MCF 10A (cell line): ENCODE measurements at regions of chr1 and their contacts with region 1.

Region 1: DNA sequence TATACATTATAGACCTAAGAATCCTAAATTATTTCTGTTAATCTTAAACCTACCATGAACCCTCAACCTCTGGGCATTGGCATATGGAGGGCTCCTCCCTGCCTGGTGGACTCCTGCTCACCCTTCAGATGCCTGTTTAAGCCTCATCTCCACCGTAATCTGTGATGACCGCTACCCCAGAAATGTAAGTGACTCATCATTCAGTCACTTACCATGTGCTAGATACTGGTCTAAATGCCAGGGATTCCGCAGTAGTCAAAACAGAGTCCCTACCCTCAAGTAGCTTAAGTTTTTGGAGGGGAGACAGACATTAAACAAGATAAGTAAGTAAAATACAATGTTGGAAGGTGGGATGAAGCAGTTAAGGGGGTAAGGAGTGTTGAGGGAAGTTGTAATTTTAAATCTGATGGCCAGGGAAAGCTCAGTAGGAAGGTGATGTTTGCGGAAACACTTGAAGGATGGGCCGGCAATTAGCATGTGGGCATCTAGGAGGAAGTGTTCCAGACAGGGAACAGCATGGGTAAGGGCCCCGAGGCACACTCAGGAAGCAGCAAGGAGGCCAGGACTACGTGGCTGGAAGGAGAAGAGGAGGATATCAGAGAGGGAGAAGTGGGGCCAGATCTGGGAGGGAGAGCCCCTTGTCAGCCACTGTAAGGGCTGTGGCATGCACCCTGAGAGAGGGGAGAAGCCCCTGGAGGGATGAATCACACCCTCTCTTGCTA is 141.7 kb upstream of the HOOK1 start:
- DNase-seq: peak; percentile 77
- H3K4me3 Mint-ChIP-seq: peak overlapping the region; percentile 59
- H3K27ac Mint-ChIP-seq: peak overlapping the region; percentile 94
- H3K4me1 Mint-ChIP-seq: peaks cover 41% of the 10 kb centered on the region
- H3K27me3 Mint-ChIP-seq: no peaks in the 10 kb centered on the region
- CTCF ChIP-seq: no peak

Region 2: DNA sequence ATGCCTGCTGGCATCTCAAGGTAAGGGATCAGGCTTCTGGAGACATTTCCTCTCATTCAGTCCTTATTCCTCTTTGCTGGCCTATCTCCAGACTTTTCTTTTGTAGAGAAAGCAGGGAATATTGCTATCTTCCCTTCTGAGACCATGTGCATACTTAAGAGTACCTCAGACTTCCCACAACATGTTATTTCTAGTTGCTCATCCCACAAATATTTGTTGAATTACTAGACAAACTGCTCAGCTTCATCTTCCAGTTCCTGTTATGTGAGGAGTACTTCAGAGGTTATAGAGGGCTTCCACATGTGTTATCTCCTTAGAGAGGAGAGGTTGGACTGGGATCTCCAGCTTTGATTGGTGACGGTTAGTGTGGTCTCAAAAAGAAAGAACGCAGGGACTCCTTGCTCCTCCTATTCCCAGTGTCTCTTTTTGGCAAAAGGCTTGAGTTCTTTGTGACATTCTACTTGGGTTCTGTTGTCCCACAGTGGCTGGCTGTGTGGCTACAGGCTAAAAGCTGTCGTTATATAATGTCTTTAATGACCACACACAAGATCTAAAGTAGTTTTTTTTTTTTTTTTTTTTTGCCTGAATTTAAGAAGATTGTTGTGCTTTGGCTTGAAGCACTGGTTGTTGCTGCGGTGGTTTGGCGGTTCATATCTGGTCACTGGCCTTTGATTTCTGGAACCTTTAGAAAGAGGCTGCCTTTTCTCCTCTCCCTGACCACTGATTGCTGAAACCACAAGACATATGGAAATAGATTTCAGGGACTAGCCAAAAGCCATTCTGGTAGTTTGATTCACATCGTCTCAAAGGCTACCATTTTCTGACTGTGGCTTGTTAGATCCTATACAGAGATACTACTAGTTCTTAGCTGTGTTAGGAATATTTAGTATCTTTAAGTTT is 297.4 kb before region 1 on chr1:
- CTCF ChIA-PET with region 1: no interaction called
- POLR2A ChIA-PET with region 1: interaction called, 10 read pairs
- intact Hi-C with region 1: no loop called
- DNase-seq: peak; percentile 87
- H3K4me3 Mint-ChIP-seq: peak overlapping the region; percentile 36
- H3K27ac Mint-ChIP-seq: peak overlapping the region; percentile 84
- H3K4me1 Mint-ChIP-seq: peaks cover 7% of the 10 kb centered on the region
- H3K27me3 Mint-ChIP-seq: no peaks in the 10 kb centered on the region
- CTCF ChIP-seq: no peak

Region 3: GRCh38 chr1:59427155-59427554 is 245.9 kb before region 1 on chr1:
- CTCF ChIA-PET with region 1: interaction called, 3 read pairs
- POLR2A ChIA-PET with region 1: interaction called, 14 read pairs
- intact Hi-C with region 1: no loop called
- DNase-seq: peak; percentile 70
- H3K4me3 Mint-ChIP-seq: peak overlapping the region; percentile 35
- H3K27ac Mint-ChIP-seq: peak overlapping the region; percentile 71
- H3K4me1 Mint-ChIP-seq: peaks cover 38% of the 10 kb centered on the region
- H3K27me3 Mint-ChIP-seq: no peaks in the 10 kb centered on the region
- CTCF ChIP-seq: no peak

Region 4: GRCh38 chr1:59498640-59499039 is 174.4 kb before region 1 on chr1:
- CTCF ChIA-PET with region 1: interaction called, 4 read pairs
- POLR2A ChIA-PET with region 1: interaction called, 32 read pairs
- intact Hi-C with region 1: no loop called
- DNase-seq: peak; percentile 35
- H3K4me3 Mint-ChIP-seq: no peak overlapping the region
- H3K27ac Mint-ChIP-seq: peak overlapping the region; percentile 90
- H3K4me1 Mint-ChIP-seq: peaks cover 31% of the 10 kb centered on the region
- H3K27me3 Mint-ChIP-seq: no peaks in the 10 kb centered on the region
- CTCF ChIP-seq: no peak

Region 5: GRCh38 chr1:59596441-59596861 is 76.6 kb before region 1 on chr1:
- CTCF ChIA-PET with region 1: no interaction called
- POLR2A ChIA-PET with region 1: interaction called, 12 read pairs
- intact Hi-C with region 1: no loop called
- DNase-seq: peak; percentile 71
- H3K4me3 Mint-ChIP-seq: no peak overlapping the region
- H3K27ac Mint-ChIP-seq: peak overlapping the region; percentile 59
- H3K4me1 Mint-ChIP-seq: peaks cover 19% of the 10 kb centered on the region
- H3K27me3 Mint-ChIP-seq: no peaks in the 10 kb centered on the region
- CTCF ChIP-seq: no peak

Region 6: DNA sequence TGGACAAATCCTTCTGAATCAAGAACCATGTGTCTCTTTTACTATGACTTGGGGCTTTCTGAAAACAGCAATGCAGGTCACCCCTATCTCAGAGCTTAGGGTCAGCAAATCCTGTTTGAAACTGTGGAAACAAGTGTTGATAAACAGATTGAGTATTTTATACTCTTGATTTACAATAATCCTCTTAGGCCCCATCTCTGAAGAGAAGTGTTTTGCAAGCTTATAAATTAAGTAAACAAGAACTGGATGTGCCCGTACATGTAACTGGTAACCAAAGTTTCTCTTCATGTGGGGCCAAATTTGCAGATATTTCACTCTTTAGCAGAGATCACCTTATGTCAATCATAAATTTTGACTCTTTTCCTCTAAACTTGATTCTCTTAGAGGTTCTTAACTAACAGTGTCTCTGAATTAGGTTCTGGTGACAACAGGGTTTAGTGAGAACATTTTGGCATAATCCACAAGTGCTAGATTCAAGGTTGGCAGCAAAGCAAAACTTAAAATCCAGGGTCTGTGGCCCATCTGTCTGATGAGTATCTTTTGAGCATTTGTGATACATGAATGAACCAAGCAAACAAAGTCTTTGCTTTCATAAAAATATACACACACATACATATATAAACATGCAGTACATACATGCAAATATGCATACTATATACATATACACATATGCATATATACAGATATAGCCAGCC is 41.3 kb before region 1 on chr1:
- CTCF ChIA-PET with region 1: no interaction called
- POLR2A ChIA-PET with region 1: interaction called, 17 read pairs
- intact Hi-C with region 1: no loop called
- DNase-seq: peak; percentile 29
- H3K4me3 Mint-ChIP-seq: no peak overlapping the region
- H3K27ac Mint-ChIP-seq: peak overlapping the region; percentile 88
- H3K4me1 Mint-ChIP-seq: peaks cover 7% of the 10 kb centered on the region
- H3K27me3 Mint-ChIP-seq: no peaks in the 10 kb centered on the region
- CTCF ChIP-seq: no peak

Region 7: DNA sequence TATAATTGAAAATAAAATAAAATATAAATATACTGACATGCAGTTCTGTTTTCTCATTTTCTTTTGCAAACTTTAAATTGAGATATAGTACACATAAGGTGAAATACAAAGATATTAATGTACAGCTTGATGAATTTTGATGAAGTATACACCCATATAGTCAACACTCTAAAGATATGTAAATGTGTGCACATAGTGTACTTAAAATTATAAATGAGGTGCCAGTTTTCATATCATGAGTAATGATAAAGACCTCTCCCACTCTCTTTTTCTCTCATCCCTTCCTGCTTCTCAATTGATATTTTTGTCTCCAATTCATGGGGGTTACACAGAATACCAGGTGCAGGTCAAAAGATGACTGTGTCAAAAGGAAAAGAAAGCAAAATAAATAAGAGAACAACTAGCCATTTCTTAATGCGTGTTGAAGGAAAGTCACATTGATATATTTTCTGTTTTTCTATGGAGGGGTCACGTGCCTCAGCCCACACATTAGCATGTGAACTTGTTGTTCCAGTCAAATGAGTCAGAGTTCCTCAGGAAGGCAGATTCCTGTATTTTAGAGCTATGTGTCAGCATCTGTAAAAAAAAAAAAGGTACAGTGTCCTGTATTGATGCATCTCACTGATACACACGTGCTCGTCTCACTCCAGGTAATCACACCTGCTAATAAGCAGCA is 77.5 kb after region 1 on chr1:
- CTCF ChIA-PET with region 1: interaction called, 3 read pairs
- POLR2A ChIA-PET with region 1: interaction called, 23 read pairs
- intact Hi-C with region 1: no loop called
- DNase-seq: peak; percentile 87
- H3K4me3 Mint-ChIP-seq: peak overlapping the region; percentile 30
- H3K27ac Mint-ChIP-seq: peak overlapping the region; percentile 91
- H3K4me1 Mint-ChIP-seq: peaks cover 18% of the 10 kb centered on the region
- H3K27me3 Mint-ChIP-seq: no peaks in the 10 kb centered on the region
- CTCF ChIP-seq: no peak